Activated CD8-positive, alpha-beta T cell treated with anti-CD3 and anti-CD28 coated beads, Interleukin-2, amount 10 ng/mL, durations not matched to agents 7 days and 5 days (primary cell): ENCODE measurements at regions of chr3 and their contacts with region 1.

Region 1: GRCh38 chr3:66253790-66254620 is 33.2 kb downstream of the SLC25A26 start:
- DNase-seq: no peak
- ATAC-seq: no peak
- H3K4me3 Mint-ChIP-seq: no peak overlapping the region
- H3K27ac Mint-ChIP-seq: no peak overlapping the region
- H3K4me1 Mint-ChIP-seq: no peaks in the 10 kb centered on the region
- H3K27me3 Mint-ChIP-seq: no peaks in the 10 kb centered on the region

Region 2: DNA sequence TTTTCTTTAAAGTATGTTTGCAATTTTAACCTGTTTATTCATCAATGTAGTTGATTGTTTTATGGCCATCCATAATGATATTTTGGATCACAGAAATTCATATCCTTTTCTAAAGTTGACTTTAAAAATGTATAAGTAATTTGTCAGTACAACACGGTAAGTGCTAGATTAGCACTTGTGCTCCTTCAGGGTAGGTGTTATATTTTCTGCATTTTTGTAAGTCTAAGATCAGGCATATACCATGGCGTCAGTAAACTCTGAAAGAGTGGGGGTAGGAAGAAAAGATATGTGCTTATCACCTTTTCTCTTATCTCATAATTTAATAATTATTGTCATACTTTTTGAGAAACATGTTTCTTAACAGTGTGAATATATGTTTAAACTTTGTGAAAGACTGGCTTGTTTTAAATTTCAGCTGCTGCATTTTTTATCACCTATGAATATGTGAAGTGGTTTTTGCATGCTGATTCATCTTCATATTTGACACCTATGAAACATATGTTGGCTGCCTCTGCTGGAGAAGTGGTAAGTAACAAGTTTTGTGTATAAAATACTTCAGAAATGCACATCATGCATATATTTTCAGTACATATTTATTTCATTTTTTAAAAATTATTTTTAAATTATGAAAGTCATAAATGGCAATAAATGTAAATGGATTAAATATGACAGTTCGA is 11.1 kb before region 1 on chr3:
- CTCF ChIA-PET with region 1: interaction called, 10 read pairs
- POLR2A ChIA-PET with region 1: no interaction called
- DNase-seq: no peak
- ATAC-seq: no peak
- H3K4me3 Mint-ChIP-seq: no peak overlapping the region
- H3K27ac Mint-ChIP-seq: no peak overlapping the region
- H3K4me1 Mint-ChIP-seq: peaks cover 22% of the 10 kb centered on the region
- H3K27me3 Mint-ChIP-seq: no peaks in the 10 kb centered on the region

Region 3: DNA sequence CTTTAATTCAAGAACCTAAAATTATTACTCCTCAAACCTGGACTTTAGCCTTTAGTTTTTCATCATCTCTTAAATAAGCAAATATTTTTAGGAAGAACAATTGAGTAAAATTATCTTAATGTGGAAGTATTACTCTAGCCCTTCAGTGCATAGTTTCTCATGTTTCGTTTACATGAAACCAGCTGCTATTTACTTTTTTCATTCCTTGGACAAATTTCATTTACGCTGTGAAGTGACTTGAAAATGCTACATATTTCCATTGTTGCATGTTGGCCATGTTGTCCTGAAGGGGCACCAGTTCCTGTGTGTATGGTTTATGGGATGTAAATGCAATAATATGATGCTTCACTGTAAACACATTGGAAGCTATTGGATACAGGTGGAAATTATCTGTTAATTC is 16.7 kb after region 1 on chr3:
- CTCF ChIA-PET with region 1: interaction called, 16 read pairs
- POLR2A ChIA-PET with region 1: no interaction called
- DNase-seq: no peak
- ATAC-seq: no peak
- H3K4me3 Mint-ChIP-seq: no peak overlapping the region
- H3K27ac Mint-ChIP-seq: no peak overlapping the region
- H3K4me1 Mint-ChIP-seq: no peaks in the 10 kb centered on the region
- H3K27me3 Mint-ChIP-seq: no peaks in the 10 kb centered on the region

Region 4: DNA sequence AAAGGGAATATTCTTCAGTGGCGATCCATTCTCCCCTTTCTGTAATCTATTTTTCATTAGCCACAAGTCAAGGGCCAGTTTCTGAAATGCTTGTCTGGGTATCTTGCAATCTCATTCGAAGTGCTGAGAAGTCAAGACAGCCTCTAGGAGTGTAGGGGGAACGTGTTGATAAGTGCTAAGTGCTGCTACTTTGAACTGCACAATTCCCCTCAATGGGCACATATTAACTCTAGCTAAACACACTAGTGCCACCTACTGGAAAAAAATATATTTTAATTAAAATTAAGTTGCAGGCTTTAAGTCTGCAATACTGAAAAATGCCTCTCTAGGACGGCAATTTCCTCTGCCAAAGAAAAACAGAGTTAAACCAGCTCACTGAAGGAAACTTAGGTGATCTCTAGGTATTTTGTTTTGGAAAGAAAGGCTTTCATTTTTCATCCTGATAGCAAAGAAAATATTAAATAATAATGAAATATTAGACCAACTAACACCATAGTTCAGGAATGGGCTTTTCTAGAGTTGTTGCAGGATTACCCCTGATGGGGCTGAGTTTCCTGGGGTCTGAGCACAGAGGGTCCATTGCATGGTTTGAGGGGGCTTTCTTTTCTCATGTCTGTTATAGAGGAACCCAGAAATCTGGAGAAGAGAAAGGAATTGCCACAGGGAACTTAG is 562.2 kb after region 1 on chr3:
- CTCF ChIA-PET with region 1: interaction called, 41 read pairs
- POLR2A ChIA-PET with region 1: no interaction called
- DNase-seq: peak; percentile 23
- ATAC-seq: peak; percentile 67
- H3K4me3 Mint-ChIP-seq: no peak overlapping the region
- H3K27ac Mint-ChIP-seq: no peak overlapping the region
- H3K4me1 Mint-ChIP-seq: no peaks in the 10 kb centered on the region
- H3K27me3 Mint-ChIP-seq: peaks cover 11% of the 10 kb centered on the region